Activated B cell treated with CpG ODN at 0.5 μM for 24 hours (primary cell): ENCODE measurements at regions of chr4 and their contacts with region 1.

Region 1: DNA sequence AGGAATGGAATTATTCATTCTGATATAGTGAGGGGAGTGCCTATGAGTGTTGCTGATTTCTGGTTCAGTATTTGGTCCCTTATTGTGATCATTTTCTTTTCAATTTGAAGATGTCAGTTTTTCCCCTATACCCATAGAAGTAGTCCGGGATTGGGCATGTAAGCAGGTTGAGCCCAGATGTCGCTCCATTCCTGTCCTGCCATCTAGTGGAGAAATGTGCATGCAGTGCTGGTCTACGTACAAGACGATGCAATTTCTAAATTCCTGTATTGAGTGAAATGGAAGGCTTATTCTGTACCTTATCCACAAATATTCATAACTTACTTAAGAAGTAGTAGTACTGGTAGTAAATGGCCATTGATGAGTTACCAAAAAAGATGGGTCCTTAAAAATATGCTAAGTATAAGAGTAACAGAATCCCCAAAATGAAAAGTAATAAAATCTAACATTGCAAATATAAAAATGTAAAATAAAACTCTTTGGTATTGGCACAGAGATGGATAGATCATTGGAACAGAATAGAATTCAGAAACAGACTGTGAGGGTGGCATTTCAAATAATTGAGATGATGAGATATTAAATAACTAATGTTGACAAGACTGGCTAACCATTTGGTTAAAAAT is 60.9 kb downstream of the UGT8 start:
- DNase-seq: no peak
- ATAC-seq: peak; percentile 92
- H3K4me3 Mint-ChIP-seq: no peak overlapping the region
- H3K27ac Mint-ChIP-seq: peak overlapping the region; percentile 46
- H3K4me1 Mint-ChIP-seq: peaks cover 14% of the 10 kb centered on the region
- H3K27me3 Mint-ChIP-seq: no peaks in the 10 kb centered on the region
- CTCF ChIP-seq: no peak

Region 2: DNA sequence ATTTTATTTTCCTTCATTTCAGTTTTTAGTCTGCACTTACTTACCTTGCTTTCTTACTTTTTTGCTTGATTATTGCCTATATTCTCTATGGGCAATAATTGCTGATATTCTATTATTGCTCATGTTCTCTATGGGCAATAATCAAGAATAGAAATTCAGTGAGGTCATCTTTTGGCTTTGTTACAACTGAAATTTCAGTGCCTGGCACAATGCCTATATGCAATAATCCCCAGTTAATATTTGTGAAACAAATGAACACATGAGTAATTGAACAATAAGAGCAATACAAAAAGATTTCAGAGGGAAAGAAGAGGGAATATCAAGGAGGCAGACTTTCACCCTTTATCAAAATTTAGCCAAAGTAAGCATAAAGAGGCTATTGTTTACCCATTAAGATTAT is 631.4 kb before region 1 on chr4:
- CTCF ChIA-PET with region 1: no interaction called
- POLR2A ChIA-PET with region 1: no interaction called
- intact Hi-C with region 1: no loop called
- DNase-seq: no peak
- ATAC-seq: no peak
- H3K4me3 Mint-ChIP-seq: no peak overlapping the region
- H3K27ac Mint-ChIP-seq: no peak overlapping the region
- H3K4me1 Mint-ChIP-seq: no peaks in the 10 kb centered on the region
- H3K27me3 Mint-ChIP-seq: no peaks in the 10 kb centered on the region
- CTCF ChIP-seq: no peak

Region 3: GRCh38 chr4:114386637-114387233 is 272.8 kb before region 1 on chr4:
- CTCF ChIA-PET with region 1: interaction called, 27 read pairs
- POLR2A ChIA-PET with region 1: no interaction called
- intact Hi-C with region 1: loop called (anchors 1 kb)
- DNase-seq: no peak
- ATAC-seq: peak; percentile 40
- H3K4me3 Mint-ChIP-seq: no peak overlapping the region
- H3K27ac Mint-ChIP-seq: no peak overlapping the region
- H3K4me1 Mint-ChIP-seq: no peaks in the 10 kb centered on the region
- H3K27me3 Mint-ChIP-seq: peaks cover 16% of the 10 kb centered on the region
- CTCF ChIP-seq: peak; percentile 80

Region 4: DNA sequence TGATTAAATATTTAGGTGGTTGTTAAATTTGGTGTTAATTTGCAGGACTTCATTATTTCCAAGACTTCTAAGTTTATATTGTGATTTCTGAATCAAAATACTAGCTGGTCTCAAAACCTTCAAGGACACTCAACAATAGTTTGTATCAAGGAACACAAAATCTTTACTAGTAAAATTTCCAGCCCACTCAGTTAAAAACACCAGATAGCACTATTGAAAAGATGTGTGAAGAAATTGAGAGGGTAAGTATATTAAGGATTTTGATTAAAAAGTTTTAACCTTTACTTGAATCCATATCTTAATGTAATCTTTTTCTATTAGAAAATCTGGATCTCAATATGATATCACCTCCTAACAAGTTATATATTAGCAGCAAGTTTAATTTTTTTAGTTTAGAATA is 150.2 kb before region 1 on chr4:
- CTCF ChIA-PET with region 1: interaction called, 17 read pairs
- POLR2A ChIA-PET with region 1: no interaction called
- intact Hi-C with region 1: loop called (anchors 1 kb)
- DNase-seq: no peak
- ATAC-seq: no peak
- H3K4me3 Mint-ChIP-seq: no peak overlapping the region
- H3K27ac Mint-ChIP-seq: no peak overlapping the region
- H3K4me1 Mint-ChIP-seq: no peaks in the 10 kb centered on the region
- H3K27me3 Mint-ChIP-seq: peaks cover 17% of the 10 kb centered on the region
- CTCF ChIP-seq: no peak

Region 5: DNA sequence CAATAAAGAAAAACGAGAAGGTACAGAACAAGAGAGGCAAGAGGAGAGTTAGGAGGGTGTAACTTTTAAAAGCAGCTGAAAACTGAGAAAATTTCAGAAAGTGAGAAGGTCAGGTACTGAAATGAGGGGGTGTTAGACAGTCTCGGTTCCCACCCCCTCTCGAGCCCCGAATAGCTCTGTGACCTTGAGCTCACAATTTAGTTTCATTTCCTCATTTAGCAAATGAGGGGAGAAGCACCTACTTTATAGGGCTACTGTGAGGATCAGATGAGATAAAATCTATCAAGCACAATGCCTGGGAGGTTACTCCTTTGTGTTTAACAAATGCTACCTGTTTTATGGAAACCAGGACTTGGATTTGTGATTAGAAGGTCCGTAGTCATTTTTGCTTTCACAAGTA is 56.0 kb before region 1 on chr4:
- CTCF ChIA-PET with region 1: interaction called, 6 read pairs
- POLR2A ChIA-PET with region 1: interaction called, 3 read pairs
- intact Hi-C with region 1: loop called (anchors 1 kb)
- DNase-seq: peak; percentile 37
- ATAC-seq: peak; percentile 71
- H3K4me3 Mint-ChIP-seq: no peak overlapping the region
- H3K27ac Mint-ChIP-seq: no peak overlapping the region
- H3K4me1 Mint-ChIP-seq: peaks cover 21% of the 10 kb centered on the region
- H3K27me3 Mint-ChIP-seq: no peaks in the 10 kb centered on the region
- CTCF ChIP-seq: no peak

Region 6: DNA sequence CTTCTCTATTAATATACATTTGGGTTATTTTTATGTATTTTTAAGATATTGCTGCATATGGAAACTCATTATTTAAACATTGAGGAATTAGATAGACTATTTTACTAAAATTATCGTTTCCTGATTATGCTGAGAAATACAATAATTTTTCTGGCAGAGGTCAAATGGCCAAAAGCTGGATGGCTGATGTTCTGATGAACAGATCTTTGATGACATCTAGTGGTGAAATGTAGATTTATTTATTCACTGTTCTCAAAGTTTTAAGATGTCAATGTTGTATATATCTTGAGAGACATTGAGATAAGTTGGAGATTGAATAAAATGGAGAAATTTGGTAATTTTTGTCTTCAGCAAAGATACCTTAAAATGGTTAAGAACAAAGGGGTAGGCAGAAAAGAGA is 35.3 kb after region 1 on chr4:
- CTCF ChIA-PET with region 1: interaction called, 5 read pairs
- POLR2A ChIA-PET with region 1: no interaction called
- intact Hi-C with region 1: loop called (anchors 1 kb)
- DNase-seq: no peak
- ATAC-seq: no peak
- H3K4me3 Mint-ChIP-seq: no peak overlapping the region
- H3K27ac Mint-ChIP-seq: no peak overlapping the region
- H3K4me1 Mint-ChIP-seq: peaks cover 14% of the 10 kb centered on the region
- H3K27me3 Mint-ChIP-seq: no peaks in the 10 kb centered on the region
- CTCF ChIP-seq: peak; percentile 43